ENCODE measurements at regions of chr3 and their contacts with region 1.

Region 1: GRCh38 chr3:50272911-50273693 is 4.2 kb downstream of the SEMA3B start:
- H3K4me3 Mint-ChIP-seq: peak overlapping the region; percentile 80
- H3K27ac Mint-ChIP-seq: peak overlapping the region; percentile 66
- H3K4me1 Mint-ChIP-seq: peaks cover 30% of the 10 kb centered on the region
- H3K27me3 Mint-ChIP-seq: peaks cover 67% of the 10 kb centered on the region

Region 2: DNA sequence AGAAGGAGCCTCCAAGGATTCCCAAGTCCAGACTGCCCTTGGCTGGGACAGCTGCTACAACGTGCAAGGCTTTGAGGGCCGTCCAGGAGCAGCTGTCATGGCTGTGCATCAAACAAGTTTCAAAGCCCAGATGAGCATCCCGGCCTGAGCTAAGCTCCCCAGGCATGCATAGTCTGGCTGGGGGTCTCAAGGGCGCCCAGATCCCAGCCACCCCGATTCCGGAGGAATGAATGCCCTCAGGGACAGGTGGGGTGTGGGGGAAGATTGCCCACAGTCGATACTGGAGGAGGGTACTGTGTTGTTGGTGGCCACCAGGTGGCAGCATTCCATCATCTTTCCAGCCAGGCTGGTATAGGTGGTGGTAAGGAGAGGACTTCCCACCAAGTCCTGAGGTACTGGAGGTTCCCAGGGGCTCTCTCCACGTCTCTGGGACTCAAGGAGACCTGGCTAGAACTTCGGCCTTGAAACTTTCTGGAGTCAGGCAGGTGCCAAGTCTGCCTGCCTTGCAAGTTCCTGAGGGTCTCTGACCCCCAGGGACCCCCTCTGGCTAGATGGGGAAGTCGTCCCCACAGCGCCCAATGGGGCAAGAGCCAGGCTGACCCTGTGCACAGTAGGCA is 151.6 kb before region 1 on chr3:
- intact Hi-C with region 1: loop called (anchors 1 kb)
- H3K4me3 Mint-ChIP-seq: no peak overlapping the region
- H3K27ac Mint-ChIP-seq: no peak overlapping the region
- H3K4me1 Mint-ChIP-seq: peaks cover 5% of the 10 kb centered on the region
- H3K27me3 Mint-ChIP-seq: no peaks in the 10 kb centered on the region

Region 3: GRCh38 chr3:50192689-50193141 is 80.4 kb before region 1 on chr3:
- intact Hi-C with region 1: loop called (anchors 1 kb)
- H3K4me3 Mint-ChIP-seq: no peak overlapping the region
- H3K27ac Mint-ChIP-seq: no peak overlapping the region
- H3K4me1 Mint-ChIP-seq: peaks cover 22% of the 10 kb centered on the region
- H3K27me3 Mint-ChIP-seq: peaks cover 46% of the 10 kb centered on the region

Region 4: DNA sequence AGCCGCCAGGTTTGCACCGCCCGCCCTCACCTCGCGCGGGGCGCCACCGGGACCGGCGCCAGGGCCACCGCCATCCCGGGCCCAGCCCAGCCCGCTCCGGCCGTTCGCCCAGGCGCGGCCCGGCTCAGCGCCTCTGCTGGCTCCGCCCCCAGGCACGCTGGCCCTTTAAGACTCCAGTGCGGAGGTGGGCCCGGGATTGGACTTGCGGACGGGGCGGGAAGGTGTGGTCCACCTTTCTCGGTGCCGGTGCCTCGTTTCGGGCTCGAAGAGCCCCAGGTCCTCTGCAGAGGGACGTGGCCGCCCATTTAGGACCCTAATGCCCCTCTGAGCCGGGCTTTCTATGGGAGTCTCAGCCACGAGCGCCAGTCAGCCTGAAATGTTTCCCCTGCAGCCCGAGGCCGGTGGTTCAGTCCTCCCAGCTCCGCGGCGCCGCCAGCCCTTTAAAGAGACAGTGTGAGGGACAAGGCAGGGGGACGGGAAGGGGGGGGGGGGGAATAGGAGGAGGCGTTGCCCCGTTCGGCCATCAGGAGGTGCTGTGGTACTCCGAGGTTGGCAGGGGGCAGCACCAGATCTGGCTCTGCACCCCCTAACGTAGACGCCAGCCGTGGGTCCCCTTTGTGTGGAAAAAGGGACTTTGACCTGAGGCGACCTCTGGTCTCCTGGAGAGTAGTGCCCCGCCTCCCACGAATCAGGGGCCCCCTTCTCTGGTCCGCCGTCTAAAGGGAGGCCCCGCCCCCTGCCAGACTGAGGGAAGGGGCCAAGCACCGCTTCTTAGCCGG is 48.4 kb after region 1 on chr3:
- intact Hi-C with region 1: loop called (anchors 1 kb)
- H3K4me3 Mint-ChIP-seq: peak overlapping the region; percentile 78
- H3K27ac Mint-ChIP-seq: peak overlapping the region; percentile 97
- H3K4me1 Mint-ChIP-seq: peaks cover 83% of the 10 kb centered on the region
- H3K27me3 Mint-ChIP-seq: no peaks in the 10 kb centered on the region

Region 5: GRCh38 chr3:50724831-50725230 is 451.7 kb after region 1 on chr3:
- intact Hi-C with region 1: no loop called
- H3K4me3 Mint-ChIP-seq: no peak overlapping the region
- H3K27ac Mint-ChIP-seq: no peak overlapping the region
- H3K4me1 Mint-ChIP-seq: no peaks in the 10 kb centered on the region
- H3K27me3 Mint-ChIP-seq: no peaks in the 10 kb centered on the region